ENCODE measurements at regions of chrX and their contacts with region 1.

Region 1: GRCh38 chrX:77785486-77786364 is at the start of gene ATRX:
- DNase-seq: peak; percentile 72
- H3K4me3 Mint-ChIP-seq: peak within 1 kb of the TSS; percentile 89
- H3K27ac Mint-ChIP-seq: peak within 1 kb of the TSS; percentile 96
- H3K4me1 Mint-ChIP-seq: no peaks in the 10 kb centered on the region
- H3K27me3 Mint-ChIP-seq: no peaks in the 10 kb centered on the region
- CTCF ChIP-seq: no peak
- total RNA-seq, gene ATRX: 111 and 116 TPM in 2 replicates

Region 2: GRCh38 chrX:77668391-77669237 is 117.1 kb before region 1 on chrX:
- CTCF ChIA-PET with region 1: interaction called, 3 read pairs
- intact Hi-C with region 1: loop called (anchors 10 kb)
- DNase-seq: peak; percentile 15
- H3K4me3 Mint-ChIP-seq: peak overlapping the region; percentile 37
- H3K27ac Mint-ChIP-seq: peak overlapping the region; percentile 45
- H3K4me1 Mint-ChIP-seq: peaks cover 8% of the 10 kb centered on the region
- H3K27me3 Mint-ChIP-seq: no peaks in the 10 kb centered on the region
- CTCF ChIP-seq: no peak

Region 3: GRCh38 chrX:77693594-77693993 is 92.1 kb before region 1 on chrX:
- CTCF ChIA-PET with region 1: no interaction called
- intact Hi-C with region 1: loop called (anchors 10 kb)
- DNase-seq: no peak
- H3K4me3 Mint-ChIP-seq: no peak overlapping the region
- H3K27ac Mint-ChIP-seq: no peak overlapping the region
- H3K4me1 Mint-ChIP-seq: peaks cover 11% of the 10 kb centered on the region
- H3K27me3 Mint-ChIP-seq: no peaks in the 10 kb centered on the region
- CTCF ChIP-seq: no peak

Region 4: GRCh38 chrX:78442426-78442825 is 656.7 kb after region 1 on chrX:
- CTCF ChIA-PET with region 1: no interaction called
- intact Hi-C with region 1: no loop called
- DNase-seq: no peak
- H3K4me3 Mint-ChIP-seq: no peak overlapping the region
- H3K27ac Mint-ChIP-seq: no peak overlapping the region
- H3K4me1 Mint-ChIP-seq: no peaks in the 10 kb centered on the region
- H3K27me3 Mint-ChIP-seq: no peaks in the 10 kb centered on the region
- CTCF ChIP-seq: no peak